ENCODE measurements at regions of chr3 and their contacts with region 1.

Region 1: GRCh38 chr3:65439641-65440284 is 599.0 kb downstream of the MAGI1 start:
- DNase-seq: peak; percentile 39 to 57 (median 49)
- ATAC-seq: peak; percentile 86 to 94 (median 91)
- H3K4me3 ChIP-seq: no peak overlapping the region
- H3K27ac ChIP-seq: no peak overlapping the region
- H3K4me1 ChIP-seq: no peaks in the 10 kb centered on the region
- H3K27me3 ChIP-seq: no peaks in the 10 kb centered on the region
- CTCF ChIP-seq: peak; percentile 48 to 57 (median 50)
- POLR2A ChIP-seq: no peak

Region 2: DNA sequence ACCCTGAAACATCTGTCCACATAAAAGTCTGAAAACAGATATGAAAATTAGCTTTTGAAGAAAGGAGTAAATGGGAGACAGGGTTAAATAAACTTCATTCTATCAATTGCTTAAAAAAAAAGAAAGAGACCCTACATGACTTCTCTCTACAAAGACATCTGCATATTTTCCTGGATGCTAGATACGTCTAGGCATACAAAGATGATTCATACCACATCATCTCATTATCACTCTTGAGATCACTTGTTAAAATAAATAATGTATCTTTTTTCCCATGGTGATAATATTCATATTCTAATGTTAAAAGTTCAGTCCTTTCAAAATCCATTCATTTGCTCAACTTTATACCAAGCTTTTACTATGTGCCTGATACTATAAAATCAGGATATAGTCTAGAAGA is 303.2 kb after region 1 on chr3:
- intact Hi-C with region 1: loop called in 1 of 2 experiments (anchors 10 kb)
- DNase-seq: no peak
- ATAC-seq: no peak
- H3K4me3 ChIP-seq: no peak overlapping the region
- H3K27ac ChIP-seq: no peak overlapping the region
- H3K4me1 ChIP-seq: no peaks in the 10 kb centered on the region
- H3K27me3 ChIP-seq: no peaks in the 10 kb centered on the region
- CTCF ChIP-seq: no peak
- POLR2A ChIP-seq: no peak